ENCODE measurements at regions of chr17 and their contacts with region 1.

Region 1: GRCh38 chr17:49707608-49708514 is at the start of gene SLC35B1:
- DNase-seq: peak; percentile 99

Region 2: GRCh38 chr17:49694847-49695683 is 12.8 kb before region 1 on chr17:
- CTCF ChIA-PET with region 1: interaction called, 9 read pairs
- POLR2A ChIA-PET with region 1: interaction called, 13 read pairs
- DNase-seq: peak; percentile 53

Region 3: GRCh38 chr17:49899191-49899485 is 191.3 kb after region 1 on chr17:
- CTCF ChIA-PET with region 1: no interaction called
- POLR2A ChIA-PET with region 1: no interaction called
- DNase-seq: peak; percentile 37